ENCODE measurements at regions of chr1 and their contacts with region 1.

Region 1: GRCh38 chr1:18902523-18903290 is at the start of gene ALDH4A1:
- DNase-seq: peak; percentile 77 to 97 (median 92)
- ATAC-seq: peak; percentile 96 to 98
- H3K4me3 Mint-ChIP-seq: peak within 1 kb of the TSS; percentile 88 to 95 (median 92)
- H3K27ac Mint-ChIP-seq: peak within 1 kb of the TSS; percentile 82 to 99 (median 98)
- H3K4me1 Mint-ChIP-seq: peaks cover 15 to 58% (median 37%) of the 10 kb centered on the region in 4 donors
- H3K27me3 Mint-ChIP-seq: no peaks in the 10 kb centered on the region
- polyA plus RNA-seq, gene ALDH4A1: 0.31 to 2.0 (median 0.39) TPM

Region 2: GRCh38 chr1:18868801-18869424 is 33.8 kb before region 1 on chr1:
- POLR2A ChIA-PET with region 1: no interaction called
- DNase-seq: no peak
- ATAC-seq: no peak
- H3K4me3 Mint-ChIP-seq: no peak overlapping the region
- H3K27ac Mint-ChIP-seq: peak overlapping the region in 1 of 10 donors; percentile 67
- H3K4me1 Mint-ChIP-seq: no peaks in the 10 kb centered on the region
- H3K27me3 Mint-ChIP-seq: peaks cover 0 to 16% (median 13%) of the 10 kb centered on the region in 5 donors

Region 3: DNA sequence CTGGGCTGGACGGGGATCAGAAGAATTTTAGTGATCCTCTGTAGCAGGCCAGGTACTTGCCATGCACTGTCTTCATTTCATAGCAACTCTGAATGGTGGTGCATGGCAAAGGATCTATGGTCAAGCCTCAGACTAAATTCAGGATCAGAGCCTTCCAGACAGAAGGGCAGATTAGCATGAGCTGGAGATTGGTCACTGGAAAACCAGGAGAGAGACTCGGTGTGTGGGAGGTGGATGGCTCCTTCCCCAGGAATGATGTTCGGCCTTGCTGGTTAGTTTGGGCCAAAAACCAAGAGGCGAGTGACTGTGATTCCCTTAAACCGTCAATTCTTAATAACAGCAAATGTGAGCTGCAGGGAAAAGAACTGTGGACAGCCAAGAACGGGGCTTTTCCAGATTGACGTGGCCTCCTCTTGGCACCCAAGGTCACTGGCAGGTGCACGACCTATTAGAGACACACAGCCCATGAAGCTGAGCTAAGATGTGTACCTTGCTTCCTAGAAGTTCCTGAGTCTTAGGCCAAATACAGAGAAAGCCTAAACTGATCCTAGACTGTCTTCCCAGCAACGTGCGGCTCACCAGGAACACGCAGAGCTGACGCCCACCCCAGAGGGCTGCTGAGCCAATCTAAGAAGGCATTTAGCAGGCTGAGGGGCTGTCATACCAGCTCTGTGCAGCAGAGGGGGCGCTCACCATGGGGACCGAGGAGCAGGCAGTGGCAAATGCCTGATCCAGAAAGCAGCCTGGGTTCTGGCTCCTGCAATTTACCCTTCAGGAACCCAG is 18.9 kb before region 1 on chr1:
- POLR2A ChIA-PET with region 1: no interaction called
- DNase-seq: peak; percentile 48 to 84 (median 64)
- ATAC-seq: peak; percentile 71 to 82
- H3K4me3 Mint-ChIP-seq: no peak overlapping the region
- H3K27ac Mint-ChIP-seq: no peak overlapping the region
- H3K4me1 Mint-ChIP-seq: no peaks in the 10 kb centered on the region
- H3K27me3 Mint-ChIP-seq: no peaks in the 10 kb centered on the region

Region 4: DNA sequence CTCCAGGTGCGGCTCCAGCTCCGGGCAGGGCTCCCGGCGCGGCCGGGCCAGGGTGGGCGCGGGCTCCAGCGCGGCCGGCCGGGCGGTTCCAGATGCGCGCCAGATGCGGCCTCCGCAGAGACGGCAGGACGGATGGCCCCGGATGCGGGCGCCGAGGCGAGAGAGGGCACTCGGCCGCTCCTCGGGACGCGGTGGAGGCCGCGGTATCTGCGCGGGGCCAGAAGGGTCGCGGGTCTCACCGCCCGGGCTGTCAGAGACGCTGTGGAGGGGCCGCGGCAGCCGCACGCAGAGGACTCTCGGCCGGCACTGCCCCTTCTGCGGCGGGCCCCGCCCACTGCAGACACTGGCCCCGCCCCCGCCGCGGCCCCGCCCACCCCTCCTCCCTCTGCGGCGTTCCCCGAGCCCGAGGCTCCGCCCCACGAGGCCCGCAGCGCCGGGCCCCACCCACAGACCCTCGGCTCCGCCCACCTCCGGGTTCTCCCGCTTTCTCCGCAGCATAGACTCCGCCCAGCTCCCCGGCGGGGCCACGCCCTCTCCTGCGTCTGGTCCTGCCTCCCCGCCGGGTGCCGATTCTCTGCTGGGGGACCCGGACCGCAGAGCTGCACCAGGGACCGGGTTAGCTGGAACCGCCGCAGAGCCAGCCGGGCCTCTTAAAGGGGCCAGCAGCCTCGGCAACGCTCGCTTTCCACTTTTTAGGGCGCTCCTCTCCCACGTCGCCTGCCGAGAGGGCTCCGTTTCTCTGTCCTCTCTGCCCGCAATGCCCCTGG is 53.8 kb after region 1 on chr1 and contains the start of gene IFFO2:
- POLR2A ChIA-PET with region 1: interaction called, 17 read pairs
- DNase-seq: peak; percentile 95 to 99 (median 98)
- ATAC-seq: peak; percentile 64 to 71
- H3K4me3 Mint-ChIP-seq: peak within 1 kb of the TSS; percentile 80 to 95 (median 90)
- H3K27ac Mint-ChIP-seq: peak within 1 kb of the TSS; percentile 77 to 100 (median 96)
- H3K4me1 Mint-ChIP-seq: peaks cover 36 to 63% (median 54%) of the 10 kb centered on the region in 4 donors
- H3K27me3 Mint-ChIP-seq: no peaks in the 10 kb centered on the region
- polyA plus RNA-seq, gene IFFO2: 1.6 to 4.4 (median 4.4) TPM